Tibial artery (tissue), 4 donors: ENCODE measurements at regions of chr16 and their contacts with region 1.

Region 1: DNA sequence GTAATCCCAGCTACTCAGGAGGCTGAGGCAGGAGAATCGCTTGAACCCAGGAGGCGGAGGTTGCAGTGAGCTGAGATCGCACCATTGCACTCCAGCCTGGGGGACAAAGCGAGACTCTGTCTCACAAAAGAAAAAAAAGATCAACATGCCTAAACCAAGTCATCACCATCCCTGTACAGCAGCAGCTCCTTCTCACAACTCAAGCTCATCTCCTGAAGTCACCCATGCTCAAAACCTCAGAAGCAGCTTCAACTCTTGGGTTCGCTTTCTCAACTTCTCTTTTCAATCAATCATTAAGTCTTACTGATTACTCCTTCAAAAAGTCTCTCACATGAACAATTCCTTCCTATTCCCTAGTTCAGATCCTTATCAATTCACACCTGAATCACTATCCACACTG is 31.3 kb downstream of the PHLPP2 start:
- DNase-seq: no peak
- H3K4me3 ChIP-seq: no peak overlapping the region
- H3K27ac ChIP-seq: no peak overlapping the region
- H3K4me1 ChIP-seq: no peaks in the 10 kb centered on the region
- H3K27me3 ChIP-seq: no peaks in the 10 kb centered on the region
- CTCF ChIP-seq: no peak

Region 2: DNA sequence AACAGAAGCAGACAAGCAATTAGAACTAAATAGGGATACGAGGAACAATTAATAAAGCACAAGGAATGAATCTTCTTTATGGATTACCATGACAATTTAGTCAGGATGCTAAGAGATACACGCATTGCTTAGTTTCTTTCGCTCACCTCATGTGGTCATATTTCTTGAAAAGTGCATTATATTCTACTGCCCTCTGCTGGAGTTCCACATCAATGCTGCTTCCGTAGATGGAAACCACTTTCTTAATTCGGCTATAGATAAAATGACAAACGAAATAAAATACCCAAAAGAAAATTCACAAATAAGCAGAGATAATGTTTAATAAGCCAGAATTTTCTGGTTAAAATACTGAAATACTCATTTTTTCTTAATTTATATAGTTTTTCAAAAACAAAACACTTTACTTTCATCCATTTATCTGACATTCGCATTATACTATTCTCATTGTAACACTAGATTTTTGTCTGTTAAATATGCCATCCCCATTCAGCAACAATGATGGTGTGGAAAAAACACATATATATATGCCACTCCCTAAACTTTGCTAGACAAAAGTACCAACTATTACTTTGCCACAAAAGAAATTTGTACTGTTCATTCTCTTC is 53.4 kb after region 1 on chr16:
- intact Hi-C with region 1: loop called (anchors 10 kb)
- DNase-seq: no peak
- H3K4me3 ChIP-seq: no peak overlapping the region
- H3K27ac ChIP-seq: no peak overlapping the region
- H3K4me1 ChIP-seq: no peaks in the 10 kb centered on the region
- H3K27me3 ChIP-seq: no peaks in the 10 kb centered on the region
- CTCF ChIP-seq: peak; percentile 58 to 70

Region 3: DNA sequence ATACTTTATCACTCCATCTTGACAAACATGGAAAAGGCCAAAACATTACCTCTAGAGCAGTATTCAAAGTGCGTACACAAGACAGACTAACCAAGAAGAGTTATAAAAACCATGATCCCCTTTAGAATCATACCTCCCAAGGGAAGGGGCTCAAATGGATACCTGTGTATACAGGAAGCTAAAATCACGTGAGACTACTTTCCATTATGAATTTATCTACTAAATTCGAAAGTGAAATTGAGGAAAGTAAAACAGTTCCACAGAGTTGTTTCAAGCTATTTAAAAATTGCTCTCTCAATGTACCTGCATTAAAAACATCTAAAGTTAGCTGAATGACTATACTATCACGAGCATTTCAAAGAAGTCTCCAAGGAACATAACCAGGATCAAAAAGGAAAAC is 82.8 kb after region 1 on chr16:
- intact Hi-C with region 1: no loop called
- DNase-seq: no peak
- H3K4me3 ChIP-seq: no peak overlapping the region
- H3K27ac ChIP-seq: no peak overlapping the region
- H3K4me1 ChIP-seq: no peaks in the 10 kb centered on the region
- H3K27me3 ChIP-seq: no peaks in the 10 kb centered on the region
- CTCF ChIP-seq: no peak

Region 4: GRCh38 chr16:71933913-71934695 is 240.9 kb after region 1 on chr16:
- intact Hi-C with region 1: no loop called
- DNase-seq: no peak
- H3K4me3 ChIP-seq: no peak overlapping the region
- H3K27ac ChIP-seq: no peak overlapping the region
- H3K4me1 ChIP-seq: peaks cover 0 to 14% (median 7%) of the 10 kb centered on the region in 4 donors
- H3K27me3 ChIP-seq: no peaks in the 10 kb centered on the region
- CTCF ChIP-seq: no peak